ENCODE measurements at regions of chr2 and their contacts with region 1.

Region 1: GRCh38 chr2:161273038-161273760 is 35.0 kb upstream of the PSMD14 start:
- DNase-seq: no peak

Region 2: DNA sequence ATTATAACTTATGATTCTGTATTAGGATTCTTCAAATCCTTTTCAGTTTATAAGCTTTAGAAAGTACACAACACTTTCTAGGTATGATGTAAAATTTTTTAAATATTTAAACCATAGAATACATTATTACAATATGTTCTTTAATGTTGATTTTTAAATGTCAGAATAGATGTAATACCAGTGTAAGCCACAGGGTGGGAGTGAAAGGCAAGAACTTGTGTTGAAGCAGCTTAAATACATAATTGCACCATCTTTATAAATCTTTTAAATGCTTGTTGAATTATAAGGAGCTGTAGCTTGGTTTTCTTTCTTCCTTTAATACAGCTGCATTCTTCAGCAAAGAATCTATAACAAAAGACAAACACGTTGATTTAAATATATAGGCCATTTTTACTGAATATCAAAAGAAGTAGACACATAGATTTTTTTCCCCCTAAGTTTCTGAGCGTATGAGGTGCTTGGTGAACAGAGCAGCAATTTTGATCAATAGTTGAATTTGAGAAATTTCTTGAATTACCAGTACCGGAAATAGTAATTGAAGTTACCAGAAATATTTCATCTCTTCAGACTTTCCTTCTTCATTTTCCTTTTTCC is 50.0 kb before region 1 on chr2:
- intact Hi-C with region 1: loop called (anchors 2 kb)
- DNase-seq: no peak

Region 3: DNA sequence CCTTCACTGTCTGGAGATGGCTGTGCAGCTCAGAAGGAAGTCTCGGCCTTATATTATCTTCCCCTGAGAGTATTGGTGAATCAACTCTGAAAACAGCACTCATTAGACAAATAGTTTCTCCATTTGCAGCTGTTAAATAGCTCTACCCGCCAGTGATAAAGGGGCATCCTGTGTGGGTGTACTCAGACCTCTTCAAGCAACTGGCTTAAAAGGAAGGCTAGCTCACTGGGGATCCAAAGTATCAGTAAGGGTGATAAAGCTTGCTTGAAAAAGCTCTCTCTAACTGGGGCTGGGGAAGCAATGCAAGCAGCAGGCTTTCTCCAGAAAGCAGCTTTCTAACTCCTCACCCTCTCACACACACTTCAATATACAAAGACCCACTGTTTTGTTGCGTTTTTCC is 29.9 kb before region 1 on chr2:
- intact Hi-C with region 1: no loop called
- DNase-seq: no peak